HCT116 (cell line): ENCODE measurements at regions of chr12 and their contacts with region 1.

Region 1: GRCh38 chr12:131860562-131861291 is 32.5 kb downstream of the MMP17 start:
- DNase-seq: peak; percentile 44
- ATAC-seq: peak; percentile 30
- H3K4me3 ChIP-seq: peak overlapping the region in 1 of 2 experiments; percentile 7; a peak in 1 of 4 replicates
- H3K27ac ChIP-seq: peak overlapping the region; percentile 39; the same call in 1 of the 2 replicates
- H3K4me1 ChIP-seq: peaks cover 21 to 31% of the 10 kb centered on the region in 2 experiments
- H3K27me3 ChIP-seq: no peaks in the 10 kb centered on the region
- CTCF ChIP-seq: no peak
- POLR2A ChIP-seq: no peak
- RAD21 ChIP-seq: peak; percentile 36; the same call in 1 of the 2 replicates

Region 2: GRCh38 chr12:131894313-131894860 is 33.7 kb after region 1 on chr12 and contains the start of gene ULK1:
- CTCF ChIA-PET with region 1: no interaction called
- POLR2A ChIA-PET with region 1: no interaction called
- RAD21 ChIA-PET with region 1: no interaction called
- intact Hi-C with region 1: loop called (anchors 2 kb)
- DNase-seq: peak; percentile 64
- ATAC-seq: peak; percentile 76
- H3K4me3 ChIP-seq: peak within 1 kb of the TSS; percentile 55 to 61
- H3K27ac ChIP-seq: peak within 1 kb of the TSS; percentile 76; the same call in 1 of the 2 replicates
- H3K4me1 ChIP-seq: peaks cover 15 to 23% of the 10 kb centered on the region in 2 experiments
- H3K27me3 ChIP-seq: no peaks in the 10 kb centered on the region
- CTCF ChIP-seq: no peak
- POLR2A ChIP-seq: peak; percentile 53
- RAD21 ChIP-seq: no peak
- total RNA-seq, gene ULK1: 34.2 TPM

Region 3: GRCh38 chr12:131912518-131913294 is 52.0 kb after region 1 on chr12:
- CTCF ChIA-PET with region 1: no interaction called
- POLR2A ChIA-PET with region 1: no interaction called
- RAD21 ChIA-PET with region 1: no interaction called
- intact Hi-C with region 1: no loop called
- DNase-seq: peak; percentile 57
- ATAC-seq: peak; percentile 84
- H3K4me3 ChIP-seq: 0 out of 4 replicates have a peak overlapping the region, but pooled peaks of 1 of the 2 experiments have one; percentile 20
- H3K27ac ChIP-seq: peak overlapping the region; percentile 51; the same call in 1 of the 2 replicates
- H3K4me1 ChIP-seq: peaks cover 12 to 14% of the 10 kb centered on the region in 2 experiments
- H3K27me3 ChIP-seq: no peaks in the 10 kb centered on the region
- CTCF ChIP-seq: peak in 1 of 3 experiments; percentile 23; a peak in 1 of 6 replicates
- POLR2A ChIP-seq: no peak
- RAD21 ChIP-seq: no peak

Region 4: DNA sequence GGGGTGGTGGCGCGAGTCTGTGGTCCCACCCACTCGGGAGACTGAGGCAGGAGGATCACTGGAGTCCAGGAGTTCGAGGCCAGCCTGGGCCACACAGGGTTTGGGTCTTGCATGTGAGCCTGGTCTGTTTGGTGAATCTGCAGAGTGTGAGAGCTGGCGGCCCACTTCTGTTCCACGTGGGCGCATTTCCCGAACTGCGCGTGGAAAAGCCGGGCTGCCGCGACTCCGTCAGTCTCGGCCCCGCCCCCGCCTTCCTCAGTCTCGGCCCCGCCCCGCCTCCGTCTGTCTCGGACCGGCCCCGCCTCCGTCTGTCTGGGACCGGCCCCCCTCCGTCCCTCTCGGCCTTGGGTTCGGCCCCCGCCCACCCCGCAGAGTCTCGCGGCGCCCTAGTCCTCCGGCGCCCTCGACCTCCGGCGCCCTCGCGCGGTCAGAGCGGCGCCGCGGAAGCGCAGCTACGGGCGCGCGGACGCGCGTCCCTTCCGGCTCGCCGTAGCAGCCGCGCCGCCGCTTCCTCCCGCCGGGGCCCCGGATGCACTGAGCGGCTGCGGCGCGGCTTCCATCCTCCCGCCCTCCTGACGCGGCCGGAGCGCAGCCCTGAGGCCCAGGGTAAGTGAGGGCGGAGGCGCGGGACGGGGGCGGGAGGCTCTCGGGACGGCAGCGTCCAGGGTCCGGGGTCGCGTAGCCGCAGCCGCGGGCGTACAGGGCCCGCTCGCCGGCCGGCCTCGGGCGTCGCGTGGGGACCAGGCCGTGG is 88.9 kb after region 1 on chr12 and contains the start of gene EP400:
- CTCF ChIA-PET with region 1: no interaction called
- POLR2A ChIA-PET with region 1: no interaction called
- RAD21 ChIA-PET with region 1: no interaction called
- intact Hi-C with region 1: loop called (anchors 5 kb)
- DNase-seq: peak; percentile 81
- ATAC-seq: peak; percentile 97
- H3K4me3 ChIP-seq: peak within 1 kb of the TSS; percentile 92 to 94
- H3K27ac ChIP-seq: peak within 1 kb of the TSS; percentile 68
- H3K4me1 ChIP-seq: peaks cover 4 to 24% of the 10 kb centered on the region in 2 experiments; a peak in 3 of 4 replicates
- H3K27me3 ChIP-seq: no peaks in the 10 kb centered on the region
- CTCF ChIP-seq: peak; percentile 38 to 43 (median 39); a peak in 5 of 6 replicates
- POLR2A ChIP-seq: peak; percentile 57
- RAD21 ChIP-seq: peak; percentile 81
- total RNA-seq, gene EP400: 54.5 TPM